ENCODE measurements at regions of chr11 and their contacts with region 1.

Region 1: DNA sequence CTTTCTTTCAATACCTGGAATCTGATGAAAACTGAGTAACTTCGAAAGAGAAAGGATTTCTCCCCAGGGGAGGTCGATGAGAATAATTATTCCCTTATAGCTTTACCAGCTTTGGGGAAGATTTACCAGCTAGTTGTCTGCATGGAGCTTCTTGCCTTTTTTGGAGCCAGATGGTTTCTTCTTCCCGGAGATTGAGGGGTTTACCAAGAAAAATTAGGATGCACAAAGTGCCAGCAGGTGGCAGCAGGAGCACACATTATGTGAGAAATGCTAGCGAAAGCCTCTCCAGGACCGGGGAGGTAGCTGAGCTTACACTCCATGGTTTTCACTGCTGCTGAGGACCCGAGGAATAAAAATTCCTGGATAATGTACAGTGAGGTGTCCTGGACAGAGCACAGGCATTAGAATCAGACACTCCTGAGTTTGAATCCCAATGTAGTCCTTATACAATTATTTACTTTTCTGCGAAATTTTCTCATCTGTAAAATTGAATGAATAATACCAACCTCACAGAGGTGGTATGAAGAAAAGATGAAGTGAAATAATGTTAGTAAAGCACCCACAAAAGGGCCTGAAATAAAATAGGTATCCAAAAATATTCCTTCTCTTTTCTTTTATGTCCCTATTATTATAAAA is 46.0 kb upstream of the PARVA start:
- DNase-seq: peak; percentile 70
- H3K4me3 ChIP-seq: peak overlapping the region in 1 of 2 experiments; percentile 34; a peak in 1 of 4 replicates
- H3K27ac ChIP-seq: no peak overlapping the region; a peak in 1 of 4 replicates
- H3K4me1 ChIP-seq: peaks cover 10 to 16% of the 10 kb centered on the region in 2 experiments; a peak in 3 of 4 replicates
- H3K27me3 ChIP-seq: no peaks in the 10 kb centered on the region
- CTCF ChIP-seq: peak; percentile 85
- EP300 ChIP-seq: no peak
- RAD21 ChIP-seq: peak; percentile 99

Region 2: GRCh38 chr11:12159351-12160099 is 171.8 kb before region 1 on chr11:
- CTCF ChIA-PET with region 1: no interaction called
- POLR2A ChIA-PET with region 1: no interaction called
- DNase-seq: no peak
- H3K4me3 ChIP-seq: no peak overlapping the region
- H3K27ac ChIP-seq: peak overlapping the region; percentile 40 to 99; a peak in 3 of 4 replicates
- H3K4me1 ChIP-seq: peaks cover 2 to 73% of the 10 kb centered on the region in 2 experiments; a peak in 3 of 4 replicates
- H3K27me3 ChIP-seq: no peaks in the 10 kb centered on the region
- CTCF ChIP-seq: 0 out of 2 replicates have a peak, but pooled peaks have one; percentile 20
- EP300 ChIP-seq: peak in 1 of 2 experiments; percentile 15; a peak in 1 of 4 replicates
- RAD21 ChIP-seq: no peak

Region 3: GRCh38 chr11:12343526-12343925 is 12.2 kb after region 1 on chr11:
- CTCF ChIA-PET with region 1: interaction called, 14 read pairs
- POLR2A ChIA-PET with region 1: no interaction called
- DNase-seq: no peak
- H3K4me3 ChIP-seq: no peak overlapping the region
- H3K27ac ChIP-seq: no peak overlapping the region
- H3K4me1 ChIP-seq: no peaks in the 10 kb centered on the region
- H3K27me3 ChIP-seq: no peaks in the 10 kb centered on the region
- CTCF ChIP-seq: no peak
- EP300 ChIP-seq: no peak
- RAD21 ChIP-seq: no peak

Region 4: DNA sequence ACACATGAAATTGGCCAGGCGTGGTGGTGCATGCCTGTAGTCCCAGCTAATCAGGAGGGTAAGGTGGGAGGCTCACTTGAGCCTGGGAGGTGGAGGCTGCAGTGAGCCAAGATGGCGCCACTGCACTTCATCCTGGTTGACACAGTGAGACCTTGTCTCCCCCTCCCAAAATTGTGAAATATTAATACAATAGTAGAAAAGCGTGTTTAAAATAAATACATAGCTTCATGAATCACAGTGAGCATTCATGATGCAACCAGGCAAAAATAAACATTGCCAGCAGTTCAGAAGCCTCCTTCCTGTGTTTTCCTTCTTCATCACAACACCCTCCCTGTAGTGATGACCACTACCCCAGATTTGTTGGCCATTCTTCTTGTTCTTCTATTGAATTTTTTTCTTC is 338.6 kb after region 1 on chr11:
- CTCF ChIA-PET with region 1: interaction called, 12 read pairs
- POLR2A ChIA-PET with region 1: no interaction called
- DNase-seq: no peak
- H3K4me3 ChIP-seq: no peak overlapping the region
- H3K27ac ChIP-seq: no peak overlapping the region
- H3K4me1 ChIP-seq: 0 out of 4 replicates have a peak, but pooled peaks cover 0 to 4% of the 10 kb centered on the region in 2 experiments
- H3K27me3 ChIP-seq: no peaks in the 10 kb centered on the region
- CTCF ChIP-seq: no peak
- EP300 ChIP-seq: no peak
- RAD21 ChIP-seq: no peak

Region 5: DNA sequence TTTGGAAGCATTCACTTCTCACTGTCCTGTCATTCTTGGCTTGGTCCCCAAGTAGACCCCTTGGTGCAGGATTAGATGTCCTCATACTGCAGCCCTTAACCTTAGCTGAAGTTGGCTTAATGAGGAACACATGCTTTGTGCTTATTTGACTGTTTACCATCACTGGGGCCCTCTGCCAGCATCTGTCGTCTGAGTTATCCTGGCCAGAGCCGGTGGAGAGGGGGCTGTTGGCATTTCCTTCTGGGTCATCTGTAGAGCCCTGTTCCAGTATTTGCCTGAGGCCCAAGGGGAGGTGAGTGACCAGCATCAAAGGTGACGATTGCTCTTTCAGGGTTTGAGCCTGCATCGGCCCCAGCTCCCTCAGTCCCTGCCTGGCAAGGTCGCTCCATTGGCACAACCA is 551.3 kb after region 1 on chr11:
- CTCF ChIA-PET with region 1: interaction called, 95 read pairs
- POLR2A ChIA-PET with region 1: no interaction called
- DNase-seq: peak; percentile 82
- H3K4me3 ChIP-seq: no peak overlapping the region
- H3K27ac ChIP-seq: peak overlapping the region; percentile 5 to 94; a peak in 3 of 4 replicates
- H3K4me1 ChIP-seq: peaks cover 0 to 47% of the 10 kb centered on the region in 2 experiments; a peak in 2 of 4 replicates
- H3K27me3 ChIP-seq: no peaks in the 10 kb centered on the region
- CTCF ChIP-seq: no peak
- EP300 ChIP-seq: peak in 1 of 2 experiments; percentile 92; a peak in 2 of 4 replicates
- RAD21 ChIP-seq: peak; percentile 35

Region 6: GRCh38 chr11:12900496-12900895 is 569.1 kb after region 1 on chr11:
- CTCF ChIA-PET with region 1: interaction called, 17 read pairs
- POLR2A ChIA-PET with region 1: no interaction called
- DNase-seq: no peak
- H3K4me3 ChIP-seq: no peak overlapping the region
- H3K27ac ChIP-seq: peak overlapping the region; percentile 54 to 65; a peak in 3 of 4 replicates
- H3K4me1 ChIP-seq: peaks cover 8 to 12% of the 10 kb centered on the region in 2 experiments; a peak in 3 of 4 replicates
- H3K27me3 ChIP-seq: no peaks in the 10 kb centered on the region
- CTCF ChIP-seq: no peak
- EP300 ChIP-seq: peak in 1 of 2 experiments; percentile 42; a peak in 1 of 4 replicates
- RAD21 ChIP-seq: no peak

Region 7: DNA sequence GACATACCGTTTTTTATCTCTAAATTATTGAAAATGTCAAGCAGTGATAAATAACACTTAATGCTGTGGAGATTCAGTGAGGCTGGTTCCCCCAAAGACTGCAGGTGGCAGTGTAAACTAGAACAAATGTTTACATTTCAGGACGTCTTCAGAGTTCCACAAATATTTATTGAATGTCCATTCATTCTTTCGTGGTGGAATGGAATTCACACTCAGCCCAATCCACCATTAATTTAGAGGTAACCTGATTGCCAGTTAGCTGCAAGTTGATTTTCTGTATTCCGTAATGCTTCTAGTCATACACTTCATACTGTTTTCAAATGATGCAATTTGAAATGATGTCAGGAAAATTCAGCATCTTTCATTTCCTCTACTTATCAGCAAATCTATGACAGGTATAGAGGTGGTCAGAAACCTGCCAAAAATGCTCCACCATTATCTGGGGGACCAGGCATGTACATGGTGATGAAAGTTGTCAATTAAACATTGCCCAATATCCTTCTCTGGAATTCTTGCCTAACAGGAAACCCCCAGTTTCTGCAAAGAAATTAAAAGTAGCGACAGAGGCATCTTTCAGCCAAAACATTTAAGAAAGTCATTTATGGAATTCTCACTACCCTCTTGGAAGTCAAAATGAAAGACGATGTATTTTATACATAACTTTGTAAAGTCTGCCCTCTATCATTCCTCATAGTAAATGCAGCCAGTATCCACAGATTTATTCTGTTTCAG is 851.9 kb after region 1 on chr11:
- CTCF ChIA-PET with region 1: interaction called, 10 read pairs
- POLR2A ChIA-PET with region 1: no interaction called
- DNase-seq: peak; percentile 26
- H3K4me3 ChIP-seq: peak overlapping the region; percentile 40 to 52; a peak in 3 of 4 replicates
- H3K27ac ChIP-seq: no peak overlapping the region
- H3K4me1 ChIP-seq: no peaks in the 10 kb centered on the region; a peak in 1 of 4 replicates
- H3K27me3 ChIP-seq: no peaks in the 10 kb centered on the region
- CTCF ChIP-seq: peak; percentile 63
- EP300 ChIP-seq: no peak
- RAD21 ChIP-seq: peak; percentile 73